Right ventricle myocardium inferior (tissue), 1 donor: ENCODE measurements at regions of chr22 and their contacts with region 1.

Region 1: DNA sequence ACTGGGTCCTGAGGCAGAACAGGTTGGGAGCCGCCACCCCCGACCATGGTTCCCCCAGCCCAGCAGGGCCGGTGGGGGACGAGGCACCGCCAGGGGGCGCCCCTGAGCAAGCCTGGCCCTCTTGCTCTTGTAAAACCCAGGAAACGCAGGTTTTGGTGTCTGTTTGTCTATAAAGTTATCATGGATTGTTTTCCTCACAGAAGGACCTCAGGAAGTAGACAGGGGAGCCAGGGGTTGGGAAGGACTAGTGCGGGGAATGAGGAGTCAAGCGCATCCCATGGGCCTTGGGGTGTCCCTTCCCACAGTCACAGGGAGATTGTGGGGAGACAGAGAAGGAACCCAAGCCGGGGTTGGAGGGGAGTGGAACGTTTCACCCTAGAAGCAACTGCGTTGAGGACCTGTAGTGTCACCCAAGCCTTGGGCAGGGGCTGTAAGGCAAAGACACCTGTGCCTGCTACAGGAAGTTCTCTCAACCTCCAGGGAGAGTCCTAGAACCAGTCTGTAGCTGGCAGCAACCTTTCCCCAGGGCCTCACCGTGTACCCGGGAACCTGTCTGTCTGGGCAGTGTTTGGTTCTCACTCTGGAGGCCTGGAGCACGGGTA is 26.4 kb downstream of the KCTD17 start:
- DNase-seq: no peak
- ATAC-seq: no peak

Region 2: GRCh38 chr22:36613958-36614357 is 464.0 kb before region 1 on chr22:
- intact Hi-C with region 1: no loop called
- DNase-seq: no peak
- ATAC-seq: no peak

Region 3: DNA sequence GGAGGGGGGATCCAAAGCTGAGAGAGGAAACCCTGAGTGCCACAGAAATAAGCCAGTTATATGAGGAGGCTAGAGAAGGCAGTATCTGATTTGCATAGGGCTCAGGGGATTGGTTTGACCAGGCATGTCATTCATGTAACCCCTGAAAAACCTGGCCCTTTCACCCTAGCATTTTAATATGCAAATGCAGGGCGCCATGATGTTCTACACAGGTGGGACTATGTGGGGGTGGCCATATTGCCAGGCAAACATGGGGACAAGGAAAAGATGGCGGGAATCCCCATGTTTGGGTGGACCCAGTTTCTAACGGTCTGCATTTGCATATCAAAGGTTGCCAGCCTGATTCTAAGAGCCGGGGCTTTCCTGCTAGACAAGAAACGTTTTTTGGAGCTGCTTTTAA is 137.3 kb before region 1 on chr22:
- intact Hi-C with region 1: no loop called
- DNase-seq: no peak
- ATAC-seq: no peak

Region 4: DNA sequence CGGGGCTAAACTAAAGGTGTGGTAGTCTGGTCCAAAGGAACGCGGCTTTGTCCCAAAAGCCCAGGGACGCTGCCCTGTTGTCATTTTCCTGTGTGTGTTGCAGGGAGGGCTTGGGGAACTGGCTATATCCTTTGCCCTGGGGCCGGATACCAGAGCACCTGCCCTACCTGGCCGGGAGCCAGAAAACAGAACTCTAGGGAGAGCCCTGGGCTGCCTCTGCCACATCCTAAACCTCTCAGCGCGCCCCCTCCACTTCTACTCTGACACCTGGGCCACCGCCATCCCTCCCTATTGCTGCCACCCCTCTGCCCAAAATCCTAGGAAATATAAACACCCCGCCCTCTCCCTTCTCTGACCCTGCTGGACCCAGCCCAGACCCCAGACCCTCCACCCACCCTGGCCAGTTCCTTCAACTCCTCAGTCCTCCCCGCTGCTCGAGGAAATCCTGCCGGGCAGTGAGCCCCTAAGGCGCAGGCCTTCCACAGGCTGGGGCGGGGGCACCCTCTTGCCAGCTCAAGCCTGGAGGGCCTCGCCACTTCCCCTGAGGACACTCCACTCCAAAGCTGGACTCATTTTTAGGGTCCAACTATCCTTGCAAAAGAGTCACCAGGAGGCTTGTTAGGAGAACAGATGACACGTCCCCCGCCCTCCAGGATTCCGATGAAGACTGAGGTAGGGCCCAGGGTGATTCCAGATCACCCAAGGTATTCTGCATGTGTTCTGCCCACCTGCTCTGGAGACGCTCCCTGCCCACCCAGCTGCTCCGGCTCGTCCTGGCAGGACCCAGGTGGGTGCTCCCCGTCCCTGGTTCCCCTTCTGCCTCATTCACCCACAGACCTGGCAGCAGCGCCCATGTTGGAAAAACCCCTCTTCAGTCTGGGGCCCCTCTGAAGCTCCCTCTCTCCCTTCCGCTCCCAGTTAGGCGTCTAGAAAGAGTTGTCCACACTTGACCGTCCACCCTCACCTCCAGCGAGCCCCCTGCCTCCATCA is 14.3 kb before region 1 on chr22:
- intact Hi-C with region 1: no loop called
- DNase-seq: peak; percentile 61
- ATAC-seq: no peak

Region 5: DNA sequence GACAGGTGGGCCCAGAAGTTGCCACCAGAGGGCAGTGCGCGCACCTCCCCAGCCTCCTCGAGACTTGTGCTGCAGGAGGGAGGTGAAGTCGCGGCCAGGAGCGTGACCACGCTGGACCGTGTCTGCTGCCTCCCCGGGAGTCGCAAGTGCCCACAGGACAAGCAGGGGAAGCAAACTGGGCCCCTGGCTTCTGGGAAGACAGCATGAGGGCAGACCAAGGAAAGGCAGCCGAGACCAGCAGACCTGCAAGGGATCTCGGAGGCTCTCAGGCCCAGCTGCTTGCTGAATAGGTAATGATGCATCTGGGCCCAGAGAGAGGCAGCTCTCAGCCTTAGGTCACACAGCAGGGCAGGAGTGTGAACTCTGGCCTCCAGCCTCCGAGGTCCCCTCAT is 88.7 kb after region 1 on chr22:
- intact Hi-C with region 1: loop called (anchors 10 kb)
- DNase-seq: peak; percentile 93
- ATAC-seq: peak; percentile 87

Region 6: DNA sequence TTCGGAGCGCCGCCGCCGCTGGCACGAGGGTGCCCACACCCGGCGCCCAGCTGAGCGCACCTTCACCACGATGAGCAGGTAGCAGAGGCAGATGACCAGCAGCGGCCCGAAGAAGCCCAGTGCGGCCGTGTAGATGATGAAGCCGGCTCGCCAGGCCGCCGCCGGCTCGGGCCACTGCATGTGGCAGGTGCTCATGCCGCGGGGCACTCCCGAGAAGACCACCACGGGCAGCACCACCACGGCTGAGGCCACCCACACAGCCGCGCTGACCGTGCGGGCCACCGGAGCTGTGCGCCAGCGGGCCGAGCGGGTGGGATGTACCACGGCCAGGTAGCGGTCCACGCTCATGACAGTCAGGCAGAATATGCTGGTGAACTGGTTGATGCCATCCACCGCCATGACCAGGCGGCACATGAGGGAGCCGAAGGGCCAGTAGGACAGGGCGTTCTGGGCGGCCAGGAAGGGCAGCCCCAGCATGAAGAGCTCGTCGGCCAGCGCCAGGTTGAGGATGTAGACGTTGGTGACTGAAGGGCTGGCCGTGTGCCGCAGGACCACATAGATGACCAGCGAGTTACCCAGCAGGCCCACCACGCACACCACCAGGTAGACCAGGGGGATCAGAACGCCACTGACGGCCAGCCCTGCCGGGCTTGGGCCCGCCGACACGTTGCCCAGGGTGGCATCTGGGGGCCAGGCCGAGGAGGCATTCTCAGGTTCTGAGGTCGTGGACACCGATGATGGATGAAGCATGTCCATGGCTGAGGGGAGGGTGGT is 129.2 kb after region 1 on chr22:
- intact Hi-C with region 1: no loop called
- DNase-seq: no peak
- ATAC-seq: no peak